CD4-positive, alpha-beta T cell (primary cell): ENCODE measurements at regions of chr2 and their contacts with region 1.

Region 1: DNA sequence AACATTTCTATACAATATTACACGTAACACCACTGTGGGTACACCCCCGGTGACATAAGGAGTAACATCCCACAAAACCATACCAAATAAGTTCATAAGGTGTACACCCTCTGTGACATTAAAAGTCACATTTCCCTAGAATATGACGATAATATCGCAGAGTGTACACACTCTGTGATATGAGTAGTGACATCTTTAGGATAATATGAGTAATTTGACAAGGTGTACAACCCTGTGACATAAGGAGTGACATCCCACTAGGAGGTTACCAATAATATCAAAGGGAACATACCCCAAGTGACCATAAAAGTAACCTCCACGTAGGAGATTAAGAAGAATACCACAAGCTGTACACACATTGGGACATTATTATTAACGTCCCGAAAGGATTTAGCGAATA is 24.0 kb upstream of the TEX261 start:
- DNase-seq: no peak
- ATAC-seq: no peak
- H3K4me3 ChIP-seq: no peak overlapping the region
- H3K4me3 Mint-ChIP-seq: no peak overlapping the region
- H3K27ac ChIP-seq: no peak overlapping the region
- H3K27ac Mint-ChIP-seq: no peak overlapping the region
- H3K4me1 ChIP-seq: peaks cover 4% of the 10 kb centered on the region
- H3K4me1 Mint-ChIP-seq: peaks cover 5% of the 10 kb centered on the region
- H3K27me3 ChIP-seq: no peaks in the 10 kb centered on the region
- H3K27me3 Mint-ChIP-seq: no peaks in the 10 kb centered on the region
- CTCF ChIP-seq: no peak

Region 2: GRCh38 chr2:70142590-70143313 is 875.9 kb before region 1 on chr2:
- CTCF ChIA-PET with region 1: no interaction called
- POLR2A ChIA-PET with region 1: no interaction called
- intact Hi-C with region 1: no loop called
- DNase-seq: peak; percentile 98 to 100 (median 100)
- ATAC-seq: peak; percentile 74
- H3K4me3 ChIP-seq: peak overlapping the region; percentile 65
- H3K4me3 Mint-ChIP-seq: peak overlapping the region; percentile 99
- H3K27ac ChIP-seq: peak overlapping the region; percentile 97 to 99
- H3K27ac Mint-ChIP-seq: peak overlapping the region; percentile 99
- H3K4me1 ChIP-seq: peaks cover 60% of the 10 kb centered on the region
- H3K4me1 Mint-ChIP-seq: peaks cover 54% of the 10 kb centered on the region
- H3K27me3 ChIP-seq: no peaks in the 10 kb centered on the region
- H3K27me3 Mint-ChIP-seq: no peaks in the 10 kb centered on the region
- CTCF ChIP-seq: peak; percentile 86

Region 3: DNA sequence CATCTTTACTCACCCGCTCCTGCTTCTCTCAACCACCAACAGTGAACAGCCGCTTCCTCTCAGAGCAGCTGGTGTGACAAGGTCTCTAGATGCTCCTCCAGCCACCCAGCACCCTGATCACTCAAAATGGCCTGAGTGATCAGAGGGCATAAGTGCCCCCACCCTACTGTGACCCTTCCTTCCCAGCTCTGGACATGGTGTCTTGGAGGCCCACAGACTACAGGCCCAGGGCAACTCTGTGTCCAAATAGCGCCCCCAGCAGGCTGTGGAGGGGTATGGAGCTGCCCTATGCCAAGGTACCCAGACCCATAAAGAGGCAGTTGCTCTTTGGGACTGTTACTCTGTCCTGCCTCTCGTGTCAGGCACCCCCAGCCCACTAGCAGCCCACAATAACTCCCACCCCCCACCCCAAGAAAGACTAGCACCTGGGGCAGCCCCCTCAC is 58.2 kb before region 1 on chr2:
- CTCF ChIA-PET with region 1: no interaction called
- POLR2A ChIA-PET with region 1: no interaction called
- intact Hi-C with region 1: no loop called
- DNase-seq: no peak
- ATAC-seq: no peak
- H3K4me3 ChIP-seq: no peak overlapping the region
- H3K4me3 Mint-ChIP-seq: no peak overlapping the region
- H3K27ac ChIP-seq: no peak overlapping the region
- H3K27ac Mint-ChIP-seq: no peak overlapping the region
- H3K4me1 ChIP-seq: peaks cover 15% of the 10 kb centered on the region
- H3K4me1 Mint-ChIP-seq: peaks cover 8% of the 10 kb centered on the region
- H3K27me3 ChIP-seq: peaks cover 22 to 35% of the 10 kb centered on the region in 2 experiments
- H3K27me3 Mint-ChIP-seq: peaks cover 69% of the 10 kb centered on the region
- CTCF ChIP-seq: no peak

Region 4: DNA sequence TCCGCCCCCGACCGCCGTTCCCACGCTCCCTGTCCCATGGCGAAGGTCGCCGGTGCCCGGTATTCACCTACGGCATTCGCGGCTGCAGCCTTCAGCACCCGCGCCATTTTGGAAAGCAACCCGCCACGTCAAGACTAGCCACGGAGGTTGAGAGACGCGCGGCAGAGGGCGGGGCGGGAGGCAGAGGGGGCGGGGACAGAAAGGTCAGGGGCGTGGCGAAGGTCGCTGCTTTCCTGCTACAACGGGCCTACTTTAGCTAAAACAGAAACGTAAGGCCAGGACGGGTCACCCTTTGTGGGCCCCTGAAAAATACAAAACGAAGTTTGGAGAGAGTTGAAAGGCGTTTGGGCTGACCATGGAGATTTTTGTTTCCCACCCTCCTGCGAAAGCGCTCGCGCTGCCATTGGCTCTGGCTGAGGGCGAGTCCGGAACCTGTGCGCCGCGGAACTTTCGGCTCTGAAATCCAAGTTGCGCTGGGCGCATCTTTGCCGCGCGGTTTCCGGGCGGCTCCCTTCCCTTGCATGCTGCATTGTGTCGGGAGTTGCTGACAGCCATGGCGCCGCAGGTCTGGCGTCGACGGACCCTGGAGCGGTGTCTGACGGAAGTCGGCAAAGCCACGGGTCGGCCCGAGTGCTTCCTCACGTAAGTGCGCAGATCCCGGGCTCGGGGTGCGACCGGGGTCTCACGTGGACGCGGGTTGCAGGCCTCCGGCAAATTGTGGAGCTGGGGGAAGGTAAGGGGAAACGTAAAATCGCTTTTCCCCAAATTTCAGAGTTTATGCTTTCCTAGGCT is 111.7 kb after region 1 on chr2 and contains the starts of genes MCEE and MPHOSPH10:
- CTCF ChIA-PET with region 1: no interaction called
- POLR2A ChIA-PET with region 1: interaction called, 4 read pairs
- intact Hi-C with region 1: loop called in 1 of 2 experiments (anchors 5 kb)
- DNase-seq: peak; percentile 82 to 94 (median 88)
- ATAC-seq: peak; percentile 89
- H3K4me3 ChIP-seq: peak within 1 kb of the TSS; percentile 95
- H3K4me3 Mint-ChIP-seq: no peak within 1 kb of the TSS
- H3K27ac ChIP-seq: peak within 1 kb of the TSS; percentile 77 to 89
- H3K27ac Mint-ChIP-seq: no peak within 1 kb of the TSS
- H3K4me1 ChIP-seq: peaks cover 24% of the 10 kb centered on the region
- H3K4me1 Mint-ChIP-seq: peaks cover 36% of the 10 kb centered on the region
- H3K27me3 ChIP-seq: no peaks in the 10 kb centered on the region
- H3K27me3 Mint-ChIP-seq: no peaks in the 10 kb centered on the region
- CTCF ChIP-seq: no peak
- total RNA-seq, gene MCEE: 4.3 to 8.0 TPM
- total RNA-seq, gene MPHOSPH10: 36.7 to 38.2 TPM

Region 5: GRCh38 chr2:71510196-71510807 is 491.7 kb after region 1 on chr2:
- CTCF ChIA-PET with region 1: interaction called, 6 read pairs
- POLR2A ChIA-PET with region 1: no interaction called
- intact Hi-C with region 1: loop called in 1 of 2 experiments (anchors 10 kb)
- DNase-seq: peak; percentile 55 to 82 (median 64)
- ATAC-seq: peak; percentile 62
- H3K4me3 ChIP-seq: no peak overlapping the region
- H3K4me3 Mint-ChIP-seq: no peak overlapping the region
- H3K27ac ChIP-seq: no peak overlapping the region
- H3K27ac Mint-ChIP-seq: no peak overlapping the region
- H3K4me1 ChIP-seq: no peaks in the 10 kb centered on the region
- H3K4me1 Mint-ChIP-seq: no peaks in the 10 kb centered on the region
- H3K27me3 ChIP-seq: no peaks in the 10 kb centered on the region
- H3K27me3 Mint-ChIP-seq: no peaks in the 10 kb centered on the region
- CTCF ChIP-seq: peak; percentile 88